WTC11 (cell line): ENCODE measurements at regions of chr16 and their contacts with region 1.

Region 1: DNA sequence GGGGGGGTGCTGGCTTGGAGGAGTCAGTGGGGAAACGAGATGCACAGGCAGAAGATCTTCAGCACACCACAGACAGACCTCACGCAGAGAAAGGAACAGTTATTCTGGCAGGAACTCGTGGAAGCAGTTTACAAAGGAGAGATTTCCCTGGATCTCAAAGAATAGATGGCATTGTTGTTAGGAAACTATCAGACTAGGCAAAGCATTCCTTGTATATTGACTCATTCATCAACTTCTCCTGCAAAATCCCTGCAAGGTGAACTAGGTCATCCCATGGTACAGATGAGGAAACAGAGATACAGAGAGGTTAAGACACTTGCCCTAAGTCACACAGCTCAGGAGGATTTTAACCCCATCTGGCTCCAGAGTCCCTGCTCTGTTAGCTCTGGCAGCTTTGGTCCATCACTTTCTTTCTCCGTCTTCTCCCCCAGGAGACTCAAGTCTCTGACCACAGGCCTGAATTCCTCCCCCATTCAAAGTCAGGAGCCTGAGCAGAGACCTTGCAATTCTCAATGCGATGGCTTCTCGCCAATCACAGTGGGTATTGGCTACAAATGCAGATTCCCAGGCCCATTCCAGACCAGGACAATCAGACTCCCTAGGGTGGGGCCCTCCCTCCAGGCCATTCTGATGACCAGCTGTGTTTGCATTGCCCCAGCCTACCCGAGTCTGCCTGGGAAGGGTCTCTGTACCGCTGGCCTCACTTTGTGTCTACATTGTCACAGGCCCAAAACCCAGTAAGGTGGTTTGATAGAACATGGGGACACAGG is 56.4 kb downstream of the LITAF start:
- DNase-seq: no peak
- ATAC-seq: no peak
- H3K4me3 Mint-ChIP-seq: no peak overlapping the region
- H3K27ac Mint-ChIP-seq: peak overlapping the region; percentile 55; the same call in 1 of the 2 replicates
- H3K4me1 Mint-ChIP-seq: peaks cover 13% of the 10 kb centered on the region; the same call in 1 of the 2 replicates
- H3K27me3 Mint-ChIP-seq: no peaks in the 10 kb centered on the region
- CTCF ChIP-seq: no peak

Region 2: DNA sequence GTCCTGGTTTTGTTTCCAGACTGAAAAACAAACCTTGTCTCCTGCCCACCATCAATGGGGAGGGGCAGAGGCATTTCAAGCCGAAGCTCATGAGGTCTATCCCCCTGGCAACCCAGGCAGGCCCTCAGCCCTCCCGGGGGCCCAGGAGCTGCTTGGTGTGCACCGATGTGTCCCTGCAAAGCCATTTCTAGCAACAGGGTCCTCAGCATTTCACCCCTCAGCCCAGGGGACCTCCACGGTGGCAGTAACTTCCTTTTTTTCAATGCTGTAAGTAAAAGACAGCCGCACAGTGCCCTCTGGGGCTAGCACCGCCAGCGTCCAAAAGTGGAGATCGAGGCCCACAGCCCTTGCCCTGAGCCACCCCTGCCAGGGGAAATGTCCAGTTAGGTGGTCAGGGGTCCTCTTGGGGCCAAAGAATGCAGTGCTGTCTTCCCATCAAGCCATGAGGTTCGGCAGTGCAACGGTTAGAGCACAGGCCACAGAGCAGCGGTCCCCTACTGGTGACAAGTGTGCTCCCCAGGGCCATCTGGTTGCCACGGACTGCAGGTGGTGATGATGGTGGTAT is 23.5 kb before region 1 on chr16:
- CTCF ChIA-PET with region 1: interaction called, 45 read pairs
- POLR2A ChIA-PET with region 1: no interaction called
- DNase-seq: no peak
- ATAC-seq: 0 out of 2 replicates have a peak, but pooled peaks have one; percentile 20
- H3K4me3 Mint-ChIP-seq: no peak overlapping the region
- H3K27ac Mint-ChIP-seq: no peak overlapping the region
- H3K4me1 Mint-ChIP-seq: peaks cover 17% of the 10 kb centered on the region
- H3K27me3 Mint-ChIP-seq: no peaks in the 10 kb centered on the region; the same call in 1 of the 2 replicates
- CTCF ChIP-seq: no peak

Region 3: DNA sequence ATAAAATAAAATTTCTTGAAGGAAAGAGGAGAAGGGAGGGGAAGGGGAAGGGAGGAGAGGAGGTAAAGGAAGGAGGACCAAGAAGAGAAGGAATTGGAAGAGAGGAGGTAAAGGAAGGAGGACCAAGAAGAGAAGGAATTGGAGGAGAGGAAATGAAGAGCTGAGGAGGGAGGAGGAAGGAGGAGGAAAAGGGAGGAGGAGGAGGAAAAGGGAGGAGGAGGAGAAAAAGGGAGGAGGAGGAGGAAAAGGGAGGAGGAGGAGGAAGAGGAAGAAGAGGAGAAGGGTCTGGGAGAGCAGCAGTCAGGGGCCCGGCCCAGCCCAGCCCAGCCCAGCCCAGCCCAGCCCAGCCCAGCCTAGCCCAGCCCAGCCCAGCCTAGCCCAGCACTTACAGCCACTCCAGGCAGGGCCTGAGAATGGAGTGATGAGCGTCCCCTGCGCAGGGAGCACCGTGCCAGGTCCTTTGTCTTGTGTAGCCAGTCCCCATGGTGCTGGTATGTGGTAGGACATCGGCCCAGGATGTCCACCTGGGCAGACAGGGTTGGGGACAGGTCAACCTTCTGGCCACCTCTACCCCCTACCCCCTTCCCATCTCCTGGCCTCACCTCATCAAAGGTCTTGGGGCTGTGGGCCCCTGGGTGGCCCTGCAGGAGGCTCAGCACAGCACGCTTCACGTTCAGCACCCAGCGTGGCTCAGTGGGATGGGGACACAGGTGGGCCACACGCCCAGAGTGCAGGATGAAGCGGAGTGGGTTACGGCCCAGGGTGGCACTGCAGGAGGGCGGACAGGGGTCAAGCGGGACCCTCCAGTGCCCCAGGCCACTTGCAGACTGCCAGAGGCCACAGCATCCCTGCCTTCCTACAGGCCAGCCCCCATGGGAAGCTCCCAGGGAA is 14.6 kb before region 1 on chr16:
- CTCF ChIA-PET with region 1: interaction called, 45 read pairs
- POLR2A ChIA-PET with region 1: no interaction called
- DNase-seq: no peak
- ATAC-seq: no peak
- H3K4me3 Mint-ChIP-seq: no peak overlapping the region
- H3K27ac Mint-ChIP-seq: no peak overlapping the region
- H3K4me1 Mint-ChIP-seq: peaks cover 13% of the 10 kb centered on the region
- H3K27me3 Mint-ChIP-seq: no peaks in the 10 kb centered on the region
- CTCF ChIP-seq: no peak

Region 4: GRCh38 chr16:11597239-11598101 is 67.1 kb after region 1 on chr16:
- CTCF ChIA-PET with region 1: interaction called, 16 read pairs
- POLR2A ChIA-PET with region 1: no interaction called
- DNase-seq: no peak
- ATAC-seq: 0 out of 2 replicates have a peak, but pooled peaks have one; percentile 23
- H3K4me3 Mint-ChIP-seq: no peak overlapping the region
- H3K27ac Mint-ChIP-seq: no peak overlapping the region
- H3K4me1 Mint-ChIP-seq: peaks cover 42% of the 10 kb centered on the region
- H3K27me3 Mint-ChIP-seq: no peaks in the 10 kb centered on the region
- CTCF ChIP-seq: no peak